ENCODE measurements at regions of chr5 and their contacts with region 1.

Region 1: DNA sequence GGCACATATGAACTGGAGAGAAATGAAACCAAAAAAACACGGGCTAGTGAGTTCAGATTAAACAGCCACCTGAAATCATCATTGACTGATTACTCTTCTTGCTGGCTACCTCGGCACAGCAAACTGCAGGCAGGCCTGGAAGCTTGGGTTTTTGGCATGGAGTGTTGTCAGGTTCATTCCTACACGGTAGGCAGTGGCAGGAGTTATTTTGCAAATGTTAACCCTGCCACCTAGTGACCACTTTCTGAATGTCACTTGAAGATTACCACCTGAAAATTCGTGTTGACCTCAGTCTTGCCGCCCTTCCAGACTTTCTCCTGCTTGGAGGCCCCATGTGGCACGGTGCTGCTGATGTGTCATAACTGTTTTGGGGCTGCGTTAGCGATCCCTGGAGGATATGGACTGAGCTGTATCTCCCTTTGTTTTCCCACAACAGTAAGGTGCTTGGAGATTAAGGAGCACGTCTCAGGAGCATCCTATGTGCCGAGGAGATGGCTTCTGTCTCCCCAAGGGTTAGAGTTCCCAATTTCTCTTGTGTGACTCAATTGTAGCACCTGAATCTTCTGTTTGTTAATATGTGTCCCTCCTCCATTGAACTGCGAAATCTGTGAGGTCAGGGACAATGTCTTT is 12.7 kb upstream of the CD180 start:
- DNase-seq: peak; percentile 72
- ATAC-seq: peak; percentile 83
- H3K4me3 ChIP-seq: no peak overlapping the region
- H3K27ac ChIP-seq: no peak overlapping the region
- H3K4me1 ChIP-seq: peaks cover 2% of the 10 kb centered on the region; the same call in 1 of the 2 replicates
- H3K27me3 ChIP-seq: no peaks in the 10 kb centered on the region
- CTCF ChIP-seq: peak; percentile 79
- POLR2A ChIP-seq: no peak
- RAD21 ChIP-seq: peak; percentile 83

Region 2: DNA sequence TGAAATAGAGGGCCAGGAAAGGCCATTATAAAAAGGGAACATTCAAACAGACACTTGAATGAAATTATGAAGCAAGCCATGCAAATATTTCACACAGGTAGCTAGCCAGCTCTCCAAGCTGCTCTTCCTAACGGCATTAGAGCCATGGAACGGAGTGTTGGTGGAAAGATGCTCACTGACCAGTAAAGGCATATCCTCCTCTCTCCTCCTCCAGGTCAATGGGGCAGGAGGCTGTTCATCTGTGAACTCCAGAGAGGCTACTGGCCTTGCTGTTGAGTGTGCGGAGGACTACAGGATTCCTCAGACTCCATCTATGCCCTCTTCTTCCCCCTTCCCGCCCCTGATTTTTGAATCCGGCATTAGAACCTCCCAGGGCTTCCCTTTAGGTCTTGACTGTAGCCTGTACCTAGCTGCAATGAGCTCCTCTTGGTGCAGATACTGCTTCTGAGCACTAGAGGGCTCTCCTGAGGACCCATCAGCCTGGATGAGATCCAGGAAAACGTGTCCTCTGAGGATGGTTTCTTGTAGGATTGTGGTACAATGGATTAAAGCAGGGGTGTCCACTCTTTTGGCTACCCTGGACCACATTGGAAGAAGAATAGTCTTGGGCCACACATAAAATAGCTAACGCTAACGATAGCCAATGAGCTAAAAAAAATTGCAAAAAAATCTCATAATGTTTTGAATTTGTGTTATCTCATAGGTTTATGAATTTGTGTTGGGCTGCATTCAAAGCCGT is 903.0 kb before region 1 on chr5:
- CTCF ChIA-PET with region 1: no interaction called
- POLR2A ChIA-PET with region 1: no interaction called
- dilution Hi-C with region 1: no loop called
- in situ Hi-C with region 1: loop called (anchors 25 kb)
- intact Hi-C with region 1: loop called (anchors 1 kb)
- DNase-seq: peak; percentile 63
- ATAC-seq: peak; percentile 97
- H3K4me3 ChIP-seq: no peak overlapping the region
- H3K27ac ChIP-seq: no peak overlapping the region
- H3K4me1 ChIP-seq: no peaks in the 10 kb centered on the region
- H3K27me3 ChIP-seq: peaks cover 5% of the 10 kb centered on the region
- CTCF ChIP-seq: peak; percentile 80
- POLR2A ChIP-seq: no peak
- RAD21 ChIP-seq: peak; percentile 42

Region 3: DNA sequence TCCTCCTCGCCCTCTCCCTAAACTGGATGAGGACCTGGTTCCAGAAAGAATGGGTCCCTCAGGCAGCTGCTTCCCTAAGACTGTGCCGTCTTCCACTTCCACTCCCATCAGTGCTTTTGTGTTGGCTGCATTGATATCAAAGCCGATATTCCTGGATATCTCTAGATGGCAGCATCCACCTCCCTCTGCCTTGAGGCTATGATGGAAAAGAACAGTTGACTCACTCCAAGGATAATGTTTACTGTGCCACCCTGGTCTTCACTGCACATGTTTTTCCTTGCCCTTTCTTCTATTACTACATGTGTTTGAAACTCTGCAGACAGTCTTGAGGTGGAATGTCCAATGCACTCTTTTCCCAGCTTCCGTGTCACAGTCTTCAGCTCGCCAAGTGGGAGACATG is 401.5 kb before region 1 on chr5:
- CTCF ChIA-PET with region 1: no interaction called
- POLR2A ChIA-PET with region 1: no interaction called
- dilution Hi-C with region 1: no loop called
- in situ Hi-C with region 1: loop called (anchors 5 kb)
- intact Hi-C with region 1: loop called (anchors 1 kb)
- DNase-seq: peak; percentile 55
- ATAC-seq: peak; percentile 93
- H3K4me3 ChIP-seq: no peak overlapping the region
- H3K27ac ChIP-seq: no peak overlapping the region
- H3K4me1 ChIP-seq: no peaks in the 10 kb centered on the region
- H3K27me3 ChIP-seq: peaks cover 12% of the 10 kb centered on the region
- CTCF ChIP-seq: peak; percentile 61
- POLR2A ChIP-seq: no peak
- RAD21 ChIP-seq: peak; percentile 73

Region 4: DNA sequence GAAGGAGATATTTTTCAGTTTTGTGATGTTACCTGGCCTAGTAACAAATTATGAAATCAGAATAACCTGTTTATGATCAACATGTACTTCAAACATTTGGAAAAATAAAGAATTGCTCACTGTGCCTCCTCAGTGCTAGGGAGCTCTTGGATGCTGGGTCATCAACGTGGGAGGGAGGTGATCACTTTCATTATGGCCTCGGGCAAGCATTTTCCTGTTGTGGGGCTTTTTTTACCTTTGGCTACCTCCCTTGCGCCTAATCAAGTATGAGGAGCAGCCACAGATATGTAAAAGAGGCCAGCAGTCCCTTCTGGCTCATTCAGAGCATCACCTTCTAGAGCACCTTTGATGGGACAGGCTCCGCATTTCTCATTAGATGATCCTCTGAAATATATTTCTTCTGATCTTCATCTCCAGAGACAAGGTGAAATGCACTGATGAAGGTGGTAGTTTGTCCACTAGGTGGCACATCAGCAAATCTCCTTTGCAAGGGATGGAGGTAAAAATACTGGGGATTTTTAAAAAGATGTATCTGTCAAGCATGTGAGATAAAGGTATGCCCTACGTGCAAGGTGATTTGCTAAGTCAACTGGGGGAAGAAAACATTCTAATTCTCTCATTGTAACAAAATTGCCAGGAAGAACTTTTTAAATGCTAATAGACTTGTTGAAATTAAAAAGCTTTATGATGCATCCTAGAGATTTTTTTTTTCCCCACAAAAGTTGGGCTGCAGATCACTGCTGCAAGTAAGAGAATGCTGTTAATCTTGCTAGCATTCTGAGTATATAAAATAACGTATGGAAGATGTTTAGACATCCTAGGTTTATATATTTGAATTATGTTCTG is 394.9 kb before region 1 on chr5:
- CTCF ChIA-PET with region 1: no interaction called
- POLR2A ChIA-PET with region 1: no interaction called
- dilution Hi-C with region 1: no loop called
- in situ Hi-C with region 1: loop called (anchors 5 kb)
- intact Hi-C with region 1: loop called (anchors 1 kb)
- DNase-seq: peak; percentile 63
- ATAC-seq: peak; percentile 77
- H3K4me3 ChIP-seq: no peak overlapping the region
- H3K27ac ChIP-seq: no peak overlapping the region
- H3K4me1 ChIP-seq: no peaks in the 10 kb centered on the region
- H3K27me3 ChIP-seq: peaks cover 17% of the 10 kb centered on the region
- CTCF ChIP-seq: peak; percentile 73
- POLR2A ChIP-seq: no peak
- RAD21 ChIP-seq: peak; percentile 68

Region 5: GRCh38 chr5:66958980-66959641 is 250.1 kb before region 1 on chr5:
- CTCF ChIA-PET with region 1: no interaction called
- POLR2A ChIA-PET with region 1: no interaction called
- dilution Hi-C with region 1: no loop called
- in situ Hi-C with region 1: no loop called
- intact Hi-C with region 1: loop called (anchors 2 kb)
- DNase-seq: peak; percentile 80
- ATAC-seq: peak; percentile 62
- H3K4me3 ChIP-seq: peak overlapping the region; percentile 51
- H3K27ac ChIP-seq: peak overlapping the region; percentile 81
- H3K4me1 ChIP-seq: peaks cover 8% of the 10 kb centered on the region
- H3K27me3 ChIP-seq: no peaks in the 10 kb centered on the region
- CTCF ChIP-seq: no peak
- POLR2A ChIP-seq: no peak
- RAD21 ChIP-seq: no peak

Region 6: GRCh38 chr5:67095346-67096171 is 113.7 kb before region 1 on chr5:
- CTCF ChIA-PET with region 1: no interaction called
- POLR2A ChIA-PET with region 1: no interaction called
- dilution Hi-C with region 1: no loop called
- in situ Hi-C with region 1: no loop called
- intact Hi-C with region 1: no loop called
- DNase-seq: peak; percentile 33
- ATAC-seq: peak; percentile 46
- H3K4me3 ChIP-seq: peak overlapping the region; percentile 12; the same call in 1 of the 2 replicates
- H3K27ac ChIP-seq: peak overlapping the region; percentile 95
- H3K4me1 ChIP-seq: peaks cover 14% of the 10 kb centered on the region
- H3K27me3 ChIP-seq: no peaks in the 10 kb centered on the region
- CTCF ChIP-seq: no peak
- POLR2A ChIP-seq: no peak
- RAD21 ChIP-seq: no peak

Region 7: GRCh38 chr5:67156976-67157583 is 52.2 kb before region 1 on chr5:
- CTCF ChIA-PET with region 1: interaction called, 3 read pairs
- POLR2A ChIA-PET with region 1: no interaction called
- dilution Hi-C with region 1: no loop called
- in situ Hi-C with region 1: loop called (anchors 5 kb)
- intact Hi-C with region 1: loop called (anchors 1 kb)
- DNase-seq: peak; percentile 32
- ATAC-seq: peak; percentile 40; the same call in 1 of the 2 replicates
- H3K4me3 ChIP-seq: no peak overlapping the region
- H3K27ac ChIP-seq: no peak overlapping the region
- H3K4me1 ChIP-seq: no peaks in the 10 kb centered on the region
- H3K27me3 ChIP-seq: no peaks in the 10 kb centered on the region
- CTCF ChIP-seq: peak; percentile 65
- POLR2A ChIP-seq: no peak
- RAD21 ChIP-seq: peak; percentile 57

Region 8: GRCh38 chr5:67165526-67166459 is 43.5 kb before region 1 on chr5:
- CTCF ChIA-PET with region 1: interaction called, 5 read pairs
- POLR2A ChIA-PET with region 1: no interaction called
- dilution Hi-C with region 1: no loop called
- in situ Hi-C with region 1: loop called (anchors 5 kb)
- intact Hi-C with region 1: loop called (anchors 1 kb)
- DNase-seq: peak; percentile 61
- ATAC-seq: peak; percentile 91
- H3K4me3 ChIP-seq: no peak overlapping the region
- H3K27ac ChIP-seq: peak overlapping the region; percentile 23; the same call in 1 of the 2 replicates
- H3K4me1 ChIP-seq: peaks cover 2% of the 10 kb centered on the region; the same call in 1 of the 2 replicates
- H3K27me3 ChIP-seq: no peaks in the 10 kb centered on the region
- CTCF ChIP-seq: peak; percentile 65
- POLR2A ChIP-seq: no peak
- RAD21 ChIP-seq: peak; percentile 60

Region 9: DNA sequence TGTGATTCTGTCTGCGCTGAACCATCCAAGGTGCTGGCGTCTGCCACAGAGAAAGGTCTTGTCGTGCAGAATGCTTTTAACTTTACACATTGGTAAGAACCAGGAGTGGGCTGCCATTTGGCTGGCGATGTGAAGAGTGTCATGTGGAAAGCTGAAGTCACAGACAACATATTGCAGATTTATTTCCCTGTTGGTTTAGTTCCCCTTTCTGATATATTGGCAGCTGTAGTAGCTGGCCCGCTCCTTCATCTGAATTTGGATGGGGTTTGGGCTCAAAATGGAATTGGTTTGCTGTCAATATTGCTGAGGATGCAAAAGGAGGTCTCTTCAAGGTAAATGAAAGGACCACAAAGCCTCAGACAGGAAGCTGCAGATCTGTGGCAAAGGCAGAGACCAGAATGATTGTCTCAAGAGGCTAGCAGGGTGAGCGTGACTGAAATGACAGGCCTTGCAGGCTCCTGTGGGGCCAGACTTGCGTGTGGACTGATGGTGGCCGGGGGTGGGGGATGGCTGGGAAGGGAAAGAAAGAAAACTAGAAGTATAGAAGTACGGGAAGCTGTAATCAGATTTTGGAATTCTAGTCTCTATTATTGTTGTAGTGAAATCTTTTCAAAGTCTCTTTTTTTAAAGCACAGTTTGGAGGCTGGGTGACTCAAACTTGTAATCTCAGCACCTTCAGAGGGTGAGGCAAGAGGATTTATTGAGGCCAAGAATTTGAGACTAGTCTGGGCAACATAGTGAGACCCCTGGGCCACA is 12.4 kb after region 1 on chr5:
- CTCF ChIA-PET with region 1: no interaction called
- POLR2A ChIA-PET with region 1: no interaction called
- dilution Hi-C with region 1: no loop called
- in situ Hi-C with region 1: no loop called
- intact Hi-C with region 1: no loop called
- DNase-seq: no peak
- ATAC-seq: no peak
- H3K4me3 ChIP-seq: no peak overlapping the region
- H3K27ac ChIP-seq: no peak overlapping the region
- H3K4me1 ChIP-seq: no peaks in the 10 kb centered on the region
- H3K27me3 ChIP-seq: no peaks in the 10 kb centered on the region
- CTCF ChIP-seq: no peak
- POLR2A ChIP-seq: no peak
- RAD21 ChIP-seq: no peak

Measured in IMR-90 (cell line).